ENCODE measurements at regions of chr19 and their contacts with region 1.

Region 1: GRCh38 chr19:39557441-39558151 is 17.6 kb upstream of the EID2 start:
- DNase-seq: no peak
- ATAC-seq: peak; percentile 81 to 94 (median 88)
- H3K4me3 ChIP-seq: no peak overlapping the region
- H3K27ac ChIP-seq: peak overlapping the region; percentile 10 to 68 (median 34)
- H3K4me1 ChIP-seq: peaks cover 0 to 7% (median 0%) of the 10 kb centered on the region in 4 donors
- H3K27me3 ChIP-seq: no peaks in the 10 kb centered on the region
- CTCF ChIP-seq: no peak
- POLR2A ChIP-seq: no peak

Region 2: GRCh38 chr19:39480337-39481228 is 77.0 kb before region 1 on chr19 and contains the start of gene TIMM50:
- intact Hi-C with region 1: no loop called
- DNase-seq: peak; percentile 96 to 97 (median 96)
- ATAC-seq: peak; percentile 97 to 99 (median 99)
- H3K4me3 ChIP-seq: peak within 1 kb of the TSS; percentile 72 to 91 (median 82)
- H3K27ac ChIP-seq: peak within 1 kb of the TSS; percentile 66 to 78 (median 69)
- H3K4me1 ChIP-seq: peaks cover 0 to 9% (median 3%) of the 10 kb centered on the region in 4 donors
- H3K27me3 ChIP-seq: no peaks in the 10 kb centered on the region
- CTCF ChIP-seq: no peak
- POLR2A ChIP-seq: peak; percentile 55
- total RNA-seq, gene TIMM50: 28.1 to 48.1 (median 31.3) TPM

Region 3: GRCh38 chr19:39502640-39503417 is 54.8 kb before region 1 on chr19:
- intact Hi-C with region 1: no loop called
- DNase-seq: peak; percentile 61 to 69 (median 61)
- ATAC-seq: peak; percentile 77 to 94 (median 82)
- H3K4me3 ChIP-seq: no peak overlapping the region
- H3K27ac ChIP-seq: no peak overlapping the region
- H3K4me1 ChIP-seq: peaks cover 0 to 2% (median 0%) of the 10 kb centered on the region in 4 donors
- H3K27me3 ChIP-seq: peaks cover 0 to 12% of the 10 kb centered on the region in 2 donors
- CTCF ChIP-seq: peak; percentile 59 to 77 (median 76)
- POLR2A ChIP-seq: no peak

Region 4: DNA sequence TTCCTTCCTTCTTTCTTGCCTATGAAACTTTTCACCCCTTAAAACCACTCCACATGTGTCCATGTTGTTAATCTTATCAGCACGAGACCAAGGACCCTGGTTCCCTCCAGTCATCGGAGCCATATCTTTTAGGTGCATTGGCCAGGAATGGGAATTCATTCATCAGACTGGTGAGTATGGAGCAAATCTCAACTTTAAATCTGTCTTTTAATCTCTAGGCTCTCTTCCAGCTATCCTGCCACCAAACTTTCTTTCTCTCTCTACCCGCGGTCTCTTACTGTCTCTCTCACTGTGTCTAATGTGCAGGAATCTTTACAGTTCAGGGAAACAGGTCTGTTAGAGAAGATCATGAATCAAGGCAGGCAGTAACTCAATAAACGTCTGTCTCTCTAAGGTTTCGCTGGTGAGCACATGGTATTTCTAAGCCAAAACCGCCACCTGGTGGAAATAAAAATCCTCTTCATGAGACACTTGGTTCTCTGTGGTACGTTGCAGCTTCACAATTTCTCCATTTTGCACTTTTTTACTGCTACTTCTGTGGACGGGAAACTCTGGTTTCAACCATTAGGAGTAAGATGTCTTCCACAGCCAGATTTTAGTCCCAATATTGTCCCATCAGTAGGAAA is 114.3 kb after region 1 on chr19:
- intact Hi-C with region 1: loop called (anchors 5 to 10 kb)
- DNase-seq: no peak
- ATAC-seq: peak; percentile 75 to 88 (median 80)
- H3K4me3 ChIP-seq: no peak overlapping the region
- H3K27ac ChIP-seq: no peak overlapping the region
- H3K4me1 ChIP-seq: no peaks in the 10 kb centered on the region
- H3K27me3 ChIP-seq: no peaks in the 10 kb centered on the region
- CTCF ChIP-seq: peak; percentile 59 to 81 (median 68)
- POLR2A ChIP-seq: no peak